Ascending aorta (tissue), 2 donors: ENCODE measurements at regions of chr1 and their contacts with region 1.

Region 1: DNA sequence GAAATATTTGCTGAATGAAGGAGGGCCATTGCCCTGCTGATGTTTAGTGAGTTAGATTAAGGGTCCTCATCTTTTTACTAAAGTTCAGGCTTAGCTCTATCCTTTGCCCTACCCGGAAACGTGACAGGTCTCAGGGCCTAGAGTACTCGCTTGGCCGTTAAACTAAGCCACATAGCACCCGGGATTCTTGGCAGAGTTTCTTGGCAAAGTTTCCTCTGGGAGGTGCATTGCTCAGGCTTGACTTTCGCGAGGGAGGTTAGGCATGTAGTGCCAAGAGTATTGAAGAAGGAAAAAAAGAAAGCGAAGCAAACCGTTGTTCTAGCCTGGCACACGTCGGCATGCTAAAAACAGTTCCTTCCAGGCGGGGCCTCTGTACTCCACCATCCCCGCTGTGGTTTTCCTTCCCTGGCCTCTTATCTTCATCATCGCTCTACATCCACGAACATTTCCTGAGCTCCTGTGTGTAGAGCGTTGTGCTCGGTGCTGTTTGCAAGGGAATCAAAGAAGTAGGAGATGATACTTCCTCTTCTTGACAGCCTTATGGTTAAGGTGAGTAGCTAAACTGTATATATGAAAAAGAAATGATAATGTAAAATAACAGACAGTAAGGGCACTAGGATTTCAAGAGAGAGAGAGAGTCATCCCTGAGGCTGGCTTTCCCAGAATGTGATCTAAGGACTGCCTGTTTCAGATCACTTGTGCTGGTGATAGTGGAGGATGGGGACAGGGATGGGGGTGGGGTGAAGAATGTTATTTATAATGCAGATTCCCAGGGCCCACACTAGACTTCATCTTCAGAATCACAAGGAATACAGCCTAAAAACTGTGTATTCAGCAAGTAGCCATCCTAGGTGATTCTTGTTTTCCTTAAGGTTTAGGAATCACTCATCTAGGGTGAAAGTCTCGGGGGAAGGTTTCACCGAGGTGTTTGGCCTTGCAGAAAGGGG is 18.8 kb downstream of the RNF220 start:
- DNase-seq: peak in 1 of 2 donors; percentile 90
- H3K4me3 ChIP-seq: peak overlapping the region in 1 of 2 donors; percentile 39
- H3K27ac ChIP-seq: peak overlapping the region; percentile 31 to 45
- H3K4me1 ChIP-seq: peaks cover 5 to 8% of the 10 kb centered on the region in 2 donors
- H3K27me3 ChIP-seq: peaks cover 6% of the 10 kb centered on the region
- CTCF ChIP-seq: peak in 1 of 3 experiments; percentile 3

Region 2: DNA sequence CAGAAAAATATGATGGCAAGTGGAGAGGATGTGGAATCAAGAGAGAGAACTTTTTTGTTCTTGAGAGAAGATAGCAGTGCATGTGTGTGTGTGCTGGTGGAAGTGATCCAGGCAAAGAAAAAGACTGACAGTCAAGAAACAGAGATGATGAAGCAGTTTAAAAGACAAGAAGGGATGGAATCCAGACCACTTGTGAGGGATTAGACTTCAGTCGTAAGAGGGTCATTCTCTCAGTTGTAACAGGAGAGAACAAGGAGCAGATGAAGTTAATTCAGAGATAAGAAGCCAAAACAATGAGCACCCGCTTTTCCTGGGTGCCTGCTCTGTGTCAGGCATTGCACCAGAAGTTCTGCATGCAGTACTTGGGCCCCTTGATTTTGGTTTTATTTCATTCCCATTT is 57.8 kb after region 1 on chr1:
- intact Hi-C with region 1: loop called (anchors 2 kb)
- DNase-seq: no peak
- H3K4me3 ChIP-seq: no peak overlapping the region
- H3K27ac ChIP-seq: no peak overlapping the region
- H3K4me1 ChIP-seq: peaks cover 0 to 26% of the 10 kb centered on the region in 2 donors
- H3K27me3 ChIP-seq: no peaks in the 10 kb centered on the region
- CTCF ChIP-seq: no peak

Region 3: DNA sequence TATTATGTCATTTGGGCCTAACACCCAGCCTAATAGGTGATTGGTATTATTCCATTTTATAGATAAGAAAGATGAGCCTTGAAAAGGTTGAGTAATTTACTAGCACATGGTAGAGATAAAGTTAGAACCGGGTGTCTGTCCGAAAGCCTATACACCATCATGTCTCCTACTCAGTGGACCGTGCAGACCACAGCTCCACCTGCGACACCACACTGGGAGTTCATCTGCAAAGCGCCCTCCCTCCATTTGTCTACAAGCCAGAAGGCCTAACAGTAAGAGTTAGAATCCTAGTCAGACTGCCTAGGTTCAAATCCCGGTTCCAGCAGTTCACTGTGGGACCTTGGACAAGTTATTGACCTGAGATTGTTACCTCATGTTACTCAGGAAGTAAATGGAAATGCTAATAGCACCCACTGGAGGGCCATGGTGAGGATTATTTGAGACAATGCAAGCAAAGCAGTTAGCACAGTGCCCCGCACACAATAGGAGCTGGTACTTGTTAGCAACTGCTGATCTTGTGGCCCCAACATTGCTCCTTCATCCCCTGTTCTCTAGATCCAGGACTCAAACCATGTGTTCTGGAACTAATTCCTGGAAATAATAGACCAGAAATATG is 271.1 kb after region 1 on chr1:
- intact Hi-C with region 1: no loop called
- DNase-seq: no peak
- H3K4me3 ChIP-seq: no peak overlapping the region
- H3K27ac ChIP-seq: no peak overlapping the region
- H3K4me1 ChIP-seq: no peaks in the 10 kb centered on the region
- H3K27me3 ChIP-seq: no peaks in the 10 kb centered on the region
- CTCF ChIP-seq: no peak